ENCODE measurements at regions of chr1 and their contacts with region 1.

Region 1: DNA sequence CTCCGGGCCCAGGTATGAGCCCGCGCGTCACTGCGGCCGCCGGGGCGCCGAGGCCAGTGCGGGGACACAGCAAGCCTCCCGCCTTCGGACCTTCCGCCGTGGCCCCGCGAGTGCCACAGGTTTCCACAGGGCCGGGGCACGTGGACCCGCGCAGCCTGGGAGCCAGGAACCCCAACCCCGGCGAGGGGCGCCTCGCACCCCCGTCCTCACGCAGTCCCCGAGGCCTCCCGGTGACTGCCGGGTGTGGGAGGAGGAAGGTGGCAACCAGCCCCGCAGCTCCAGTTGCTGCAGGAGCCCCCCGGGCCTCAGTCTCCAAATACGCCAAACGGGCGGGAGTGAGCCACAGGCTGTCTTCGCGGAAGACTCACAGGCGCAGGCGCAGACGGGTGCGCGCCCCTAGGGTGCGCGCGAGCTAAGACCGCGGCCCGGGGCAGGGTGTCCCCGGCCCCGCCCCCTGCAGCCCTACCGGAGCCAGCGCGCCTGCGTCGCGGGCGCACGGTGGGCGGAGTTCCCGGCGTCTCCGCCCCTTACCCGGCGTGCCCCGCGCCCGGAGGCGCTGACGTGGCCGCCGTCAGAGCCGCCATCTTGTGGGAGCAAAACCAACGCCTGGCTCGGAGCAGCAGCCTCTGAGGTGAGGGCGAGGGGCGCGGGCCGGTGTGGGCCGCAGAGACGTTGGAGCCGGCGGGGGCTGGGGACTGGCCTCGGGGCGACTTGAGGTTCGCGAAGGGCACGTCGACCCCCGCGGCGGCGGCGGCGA is at the start of gene ARF1:
- DNase-seq: peak; percentile 89 to 97 (median 95)
- H3K4me3 ChIP-seq: peak within 1 kb of the TSS; percentile 94
- H3K4me3 Mint-ChIP-seq: peak within 1 kb of the TSS; percentile 94 to 98 (median 96)
- H3K27ac ChIP-seq: peak within 1 kb of the TSS; percentile 96
- H3K27ac Mint-ChIP-seq: peak within 1 kb of the TSS; percentile 92 to 99 (median 98)
- H3K4me1 ChIP-seq: peaks cover 45% of the 10 kb centered on the region
- H3K4me1 Mint-ChIP-seq: peaks cover 45 to 67% (median 47%) of the 10 kb centered on the region in 3 donors
- H3K27me3 ChIP-seq: no peaks in the 10 kb centered on the region
- H3K27me3 Mint-ChIP-seq: no peaks in the 10 kb centered on the region
- total RNA-seq, gene ARF1: 379 TPM

Region 2: DNA sequence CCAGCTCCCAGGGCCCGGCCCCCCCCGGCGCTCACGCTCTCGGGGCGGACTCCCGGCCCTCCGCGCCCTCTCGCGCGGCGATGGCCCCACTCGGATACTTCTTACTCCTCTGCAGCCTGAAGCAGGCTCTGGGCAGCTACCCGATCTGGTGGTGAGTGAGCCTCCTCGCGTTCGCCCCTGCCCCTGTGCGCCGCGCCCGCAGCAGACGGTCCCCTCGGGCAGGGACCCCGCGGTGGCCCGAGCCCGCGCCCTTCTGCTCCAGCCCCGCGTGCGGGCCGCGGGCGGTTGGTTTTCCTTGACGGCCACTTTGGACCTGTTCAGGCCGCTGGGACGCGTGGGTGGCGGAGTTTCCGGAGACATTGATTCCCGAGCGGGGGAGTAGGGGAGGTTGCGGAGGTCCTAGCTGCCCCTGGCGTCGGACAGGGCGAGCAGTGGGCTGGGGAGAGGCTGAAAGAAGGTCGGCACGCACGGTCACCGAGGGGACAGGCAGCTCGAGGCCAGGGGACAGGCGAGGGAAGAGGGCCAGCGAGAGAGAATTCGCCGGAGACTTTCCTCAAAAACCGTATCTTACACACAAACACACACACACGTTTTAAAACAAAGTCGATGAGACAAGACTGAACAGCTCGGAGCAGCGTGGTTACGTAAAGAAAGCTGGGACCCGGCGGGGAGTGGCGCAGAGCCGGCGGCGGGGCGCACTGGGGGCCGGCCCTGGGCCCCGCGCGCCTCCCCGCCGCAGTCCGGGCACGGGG is 75.1 kb before region 1 on chr1:
- CTCF ChIA-PET with region 1: no interaction called
- POLR2A ChIA-PET with region 1: no interaction called
- DNase-seq: no peak
- H3K4me3 ChIP-seq: no peak overlapping the region
- H3K4me3 Mint-ChIP-seq: peak overlapping the region in 2 of 7 donors; percentile 15 to 47
- H3K27ac ChIP-seq: no peak overlapping the region
- H3K27ac Mint-ChIP-seq: no peak overlapping the region
- H3K4me1 ChIP-seq: no peaks in the 10 kb centered on the region
- H3K4me1 Mint-ChIP-seq: peaks cover 7 to 43% (median 7%) of the 10 kb centered on the region in 3 donors
- H3K27me3 ChIP-seq: peaks cover 35% of the 10 kb centered on the region
- H3K27me3 Mint-ChIP-seq: peaks cover 35 to 69% of the 10 kb centered on the region in 2 donors

Region 3: GRCh38 chr1:228058949-228059633 is 23.2 kb before region 1 on chr1:
- CTCF ChIA-PET with region 1: no interaction called
- POLR2A ChIA-PET with region 1: no interaction called
- DNase-seq: peak; percentile 49 to 77 (median 70)
- H3K4me3 ChIP-seq: peak overlapping the region; percentile 50
- H3K4me3 Mint-ChIP-seq: peak overlapping the region; percentile 61 to 82 (median 74)
- H3K27ac ChIP-seq: no peak overlapping the region
- H3K27ac Mint-ChIP-seq: peak overlapping the region in 4 of 8 donors; percentile 9 to 92 (median 74)
- H3K4me1 ChIP-seq: peaks cover 23% of the 10 kb centered on the region
- H3K4me1 Mint-ChIP-seq: peaks cover 6 to 19% (median 14%) of the 10 kb centered on the region in 3 donors
- H3K27me3 ChIP-seq: peaks cover 45% of the 10 kb centered on the region
- H3K27me3 Mint-ChIP-seq: peaks cover 25 to 30% of the 10 kb centered on the region in 2 donors

Region 4: DNA sequence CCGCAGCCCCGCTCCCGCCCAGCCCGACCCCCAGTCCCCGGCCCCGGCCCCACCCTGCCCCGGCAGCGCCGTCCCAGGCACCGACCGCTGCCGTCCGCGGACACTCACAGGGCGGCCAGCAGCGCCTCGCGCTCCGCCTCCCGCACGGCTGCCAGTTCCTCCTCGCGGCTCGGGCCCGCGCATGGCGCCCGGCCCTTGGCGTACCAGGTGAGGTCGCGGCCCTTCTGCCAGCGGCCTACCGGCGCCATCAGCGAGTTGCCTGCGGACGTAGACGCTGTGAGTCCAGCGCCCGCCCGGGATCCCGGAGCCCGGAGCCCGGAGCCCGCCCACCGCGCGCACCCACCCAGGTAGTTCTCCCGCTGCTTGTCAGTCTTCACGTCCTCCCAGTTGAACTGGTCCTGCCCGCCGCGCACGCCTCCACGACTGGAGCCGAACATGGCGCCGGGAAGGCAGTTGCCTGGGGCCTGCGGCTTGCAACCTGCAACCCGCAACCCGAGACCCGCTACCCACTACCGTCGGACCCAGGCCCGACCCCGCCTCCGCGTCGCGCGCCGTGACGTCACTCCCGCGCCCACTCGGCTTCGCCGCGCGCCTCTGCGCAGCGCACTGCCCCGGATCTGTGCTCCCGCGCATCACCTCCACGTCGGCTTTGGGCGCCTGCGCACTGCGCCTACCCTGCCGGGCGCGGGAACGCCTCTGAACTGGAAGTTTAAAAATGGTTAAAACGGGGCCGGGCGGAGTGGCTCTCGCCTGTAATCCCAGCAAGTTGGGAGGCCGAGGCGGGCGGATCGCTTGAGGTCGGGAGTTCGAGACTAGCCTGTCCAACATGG is 20.7 kb after region 1 on chr1 and contains the start of gene C1orf35:
- CTCF ChIA-PET with region 1: interaction called, 5 read pairs
- POLR2A ChIA-PET with region 1: interaction called, 11 read pairs
- DNase-seq: peak; percentile 92 to 95 (median 93)
- H3K4me3 ChIP-seq: peak within 1 kb of the TSS; percentile 89
- H3K4me3 Mint-ChIP-seq: peak within 1 kb of the TSS; percentile 90 to 97 (median 92)
- H3K27ac ChIP-seq: peak within 1 kb of the TSS; percentile 85
- H3K27ac Mint-ChIP-seq: peak within 1 kb of the TSS; percentile 94 to 99 (median 96)
- H3K4me1 ChIP-seq: peaks cover 21% of the 10 kb centered on the region
- H3K4me1 Mint-ChIP-seq: peaks cover 19 to 41% (median 21%) of the 10 kb centered on the region in 3 donors
- H3K27me3 ChIP-seq: no peaks in the 10 kb centered on the region
- H3K27me3 Mint-ChIP-seq: peaks cover 0 to 2% of the 10 kb centered on the region in 2 donors
- total RNA-seq, gene C1orf35: 28.7 to 29.2 TPM

Region 5: GRCh38 chr1:228109073-228109961 is 27.0 kb after region 1 on chr1 and contains the start of gene MRPL55:
- CTCF ChIA-PET with region 1: interaction called, 4 read pairs
- POLR2A ChIA-PET with region 1: interaction called, 17 read pairs
- DNase-seq: peak; percentile 97 to 99 (median 98)
- H3K4me3 ChIP-seq: peak within 1 kb of the TSS; percentile 92
- H3K4me3 Mint-ChIP-seq: peak within 1 kb of the TSS; percentile 88 to 97 (median 93)
- H3K27ac ChIP-seq: peak within 1 kb of the TSS; percentile 93
- H3K27ac Mint-ChIP-seq: peak within 1 kb of the TSS; percentile 89 to 98 (median 94)
- H3K4me1 ChIP-seq: peaks cover 21% of the 10 kb centered on the region
- H3K4me1 Mint-ChIP-seq: peaks cover 21 to 29% (median 21%) of the 10 kb centered on the region in 3 donors
- H3K27me3 ChIP-seq: no peaks in the 10 kb centered on the region
- H3K27me3 Mint-ChIP-seq: peaks cover 0 to 2% of the 10 kb centered on the region in 2 donors
- total RNA-seq, gene MRPL55: 70.0 to 71.8 TPM

Region 6: DNA sequence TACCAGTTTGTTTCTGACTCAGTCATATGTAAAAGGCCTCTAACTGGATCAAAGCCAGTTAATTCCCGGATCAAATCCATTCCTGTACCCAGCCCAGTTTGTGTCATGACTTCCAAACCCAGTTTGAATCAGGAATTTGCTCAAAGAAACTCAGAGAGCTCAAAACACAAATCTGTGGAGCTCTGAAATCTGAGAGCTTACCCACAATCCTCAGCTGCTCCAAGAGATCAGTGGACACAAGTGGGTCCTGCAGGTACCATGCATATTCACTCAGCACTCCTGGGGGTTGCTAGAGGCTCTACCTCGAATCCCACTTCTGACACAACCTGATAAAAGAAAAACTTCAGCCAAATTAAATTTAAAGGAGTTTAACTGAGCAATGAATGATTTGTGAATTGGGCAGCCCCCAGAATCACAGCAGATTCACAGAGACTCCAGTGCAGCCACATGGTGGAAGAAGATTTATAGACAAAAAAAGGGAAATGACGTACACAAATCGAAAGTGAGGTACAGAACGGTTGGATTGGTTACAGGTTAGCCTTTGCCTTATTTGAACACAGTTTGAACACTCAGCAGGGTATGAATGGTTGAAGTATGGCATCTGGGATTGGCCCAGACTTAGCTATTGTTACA is 38.7 kb after region 1 on chr1:
- CTCF ChIA-PET with region 1: no interaction called
- POLR2A ChIA-PET with region 1: no interaction called
- DNase-seq: no peak
- H3K4me3 ChIP-seq: no peak overlapping the region
- H3K4me3 Mint-ChIP-seq: no peak overlapping the region
- H3K27ac ChIP-seq: no peak overlapping the region
- H3K27ac Mint-ChIP-seq: no peak overlapping the region
- H3K4me1 ChIP-seq: no peaks in the 10 kb centered on the region
- H3K4me1 Mint-ChIP-seq: no peaks in the 10 kb centered on the region
- H3K27me3 ChIP-seq: no peaks in the 10 kb centered on the region
- H3K27me3 Mint-ChIP-seq: peaks cover 0 to 1% of the 10 kb centered on the region in 2 donors